Endothelial cell of umbilical vein (primary cell): ENCODE measurements at regions of chr12 and their contacts with region 1.

Region 1: DNA sequence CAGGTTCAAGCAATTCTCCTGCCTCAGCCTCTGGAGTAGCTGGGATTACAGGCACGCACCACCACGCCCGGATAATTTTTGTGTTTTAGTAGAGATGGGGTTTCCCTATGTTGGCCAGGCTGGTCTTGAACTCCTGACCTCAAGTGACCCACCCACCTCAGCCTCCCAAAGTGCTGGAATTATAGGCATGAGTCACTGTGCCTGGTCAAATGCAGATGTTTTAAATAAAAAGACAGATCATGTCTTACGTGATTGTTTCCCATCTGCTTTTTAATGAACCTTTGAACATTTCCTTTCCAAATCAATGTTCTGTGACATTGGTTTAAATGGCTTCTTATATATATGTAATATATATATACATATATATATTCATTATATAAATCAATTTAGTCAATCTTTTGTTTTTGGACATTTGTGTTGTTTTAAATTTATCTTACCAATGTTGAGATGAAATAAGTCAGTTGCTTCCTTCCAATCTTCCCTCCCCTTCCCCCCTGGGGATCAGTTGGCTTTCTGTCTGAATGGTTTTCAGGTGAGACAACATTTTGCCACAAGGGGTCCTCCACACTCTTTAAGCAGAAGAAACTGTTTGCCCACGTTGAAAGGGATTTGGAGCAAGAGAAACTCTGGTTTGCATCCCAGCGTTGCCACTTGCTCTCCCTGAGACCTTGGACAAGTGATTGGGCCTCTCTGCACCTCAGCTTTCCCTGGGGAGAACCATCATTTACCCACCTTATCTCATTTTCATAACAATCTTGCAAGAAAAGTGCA is 47.6 kb upstream of the RBM19 start:
- DNase-seq: no peak
- H3K4me3 ChIP-seq: no peak overlapping the region
- H3K27ac ChIP-seq: no peak overlapping the region
- H3K4me1 ChIP-seq: no peaks in the 10 kb centered on the region
- H3K27me3 ChIP-seq: no peaks in the 10 kb centered on the region
- CTCF ChIP-seq: no peak
- POLR2A ChIP-seq: no peak

Region 2: DNA sequence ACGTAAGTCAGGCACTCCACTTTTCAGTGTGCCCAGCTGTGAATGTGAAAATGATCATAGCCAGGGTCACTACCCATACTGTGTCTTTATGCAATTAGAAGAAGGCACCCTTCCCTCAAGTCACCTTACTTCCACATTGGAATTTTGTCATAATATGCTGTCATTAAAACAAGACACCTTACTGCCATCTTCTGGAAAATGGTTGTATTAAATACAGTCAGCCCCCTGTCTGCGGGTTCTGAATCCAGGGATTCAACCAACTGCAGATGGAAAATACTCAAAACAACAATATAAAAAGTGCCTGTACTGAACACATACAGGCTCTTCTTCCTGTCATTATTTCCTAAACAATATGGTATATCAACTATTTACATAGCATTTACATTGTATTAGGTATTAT is 462.4 kb after region 1 on chr12:
- CTCF ChIA-PET with region 1: no interaction called
- POLR2A ChIA-PET with region 1: no interaction called
- dilution Hi-C with region 1: loop called (anchors 25 kb)
- intact Hi-C with region 1: no loop called
- DNase-seq: no peak
- H3K4me3 ChIP-seq: no peak overlapping the region
- H3K27ac ChIP-seq: no peak overlapping the region
- H3K4me1 ChIP-seq: no peaks in the 10 kb centered on the region
- H3K27me3 ChIP-seq: peaks cover 10 to 25% of the 10 kb centered on the region in 2 experiments
- CTCF ChIP-seq: no peak
- POLR2A ChIP-seq: no peak